Activated CD4-positive, alpha-beta memory T cell treated with anti-CD3 and anti-CD28 coated beads for 36 hours (primary cell): ENCODE measurements at regions of chr10 and their contacts with region 1.

Region 1: DNA sequence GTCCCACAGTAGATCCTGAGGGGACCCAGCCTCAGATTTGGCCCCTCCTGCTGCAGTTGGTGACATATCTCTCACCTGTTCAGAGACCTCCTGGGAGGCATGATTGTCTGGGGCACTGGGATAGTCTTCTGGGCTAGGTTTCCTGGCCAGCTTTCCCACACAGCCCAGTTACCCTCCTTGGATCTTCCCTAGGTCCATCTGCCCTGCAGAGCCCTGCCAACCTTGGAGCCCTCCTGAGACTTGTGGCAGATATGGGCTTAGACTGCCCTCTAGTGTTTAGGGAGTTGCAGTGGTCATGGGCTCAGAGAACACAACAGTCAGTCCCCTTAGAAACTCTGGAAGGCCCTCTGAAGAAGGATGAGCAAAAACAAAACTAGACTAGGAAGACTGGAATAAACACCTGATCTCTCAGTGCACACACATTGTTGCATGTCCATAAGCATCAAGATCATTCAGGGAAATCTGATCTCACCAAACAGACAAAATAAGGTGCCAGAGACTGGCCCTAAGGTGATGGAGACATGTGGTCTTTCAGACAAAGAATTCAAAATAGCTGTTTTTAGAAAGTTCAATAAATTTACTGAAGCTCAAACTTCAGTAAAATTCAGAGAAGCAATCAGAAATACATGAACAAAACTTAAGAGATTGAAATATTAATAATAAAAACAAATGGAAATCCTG is 324.6 kb downstream of the ATRNL1 start:
- DNase-seq: no peak
- H3K4me3 Mint-ChIP-seq: no peak overlapping the region
- H3K27ac Mint-ChIP-seq: no peak overlapping the region
- H3K4me1 Mint-ChIP-seq: no peaks in the 10 kb centered on the region
- H3K27me3 Mint-ChIP-seq: no peaks in the 10 kb centered on the region

Region 2: DNA sequence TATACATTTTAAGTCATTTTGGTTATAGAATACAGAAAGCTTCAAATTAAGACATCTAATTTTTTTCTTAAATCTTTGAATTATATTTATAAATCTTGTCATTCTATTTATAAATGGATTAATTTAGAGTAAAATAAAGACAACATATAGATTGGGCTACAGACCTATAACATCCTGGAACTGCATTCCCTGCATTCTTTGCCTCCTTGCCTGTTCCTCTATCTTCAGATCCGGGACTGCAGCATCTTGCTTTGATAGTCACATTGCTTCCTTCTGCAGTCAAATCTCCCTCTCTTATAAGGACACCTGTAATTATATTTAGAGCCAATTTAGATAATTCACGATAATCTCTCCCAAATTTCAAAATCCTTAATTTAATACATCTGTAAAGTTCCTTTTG is 260.4 kb before region 1 on chr10:
- CTCF ChIA-PET with region 1: no interaction called
- POLR2A ChIA-PET with region 1: no interaction called
- intact Hi-C with region 1: no loop called
- DNase-seq: no peak
- H3K4me3 Mint-ChIP-seq: no peak overlapping the region
- H3K27ac Mint-ChIP-seq: no peak overlapping the region
- H3K4me1 Mint-ChIP-seq: no peaks in the 10 kb centered on the region
- H3K27me3 Mint-ChIP-seq: peaks cover 4% of the 10 kb centered on the region

Region 3: DNA sequence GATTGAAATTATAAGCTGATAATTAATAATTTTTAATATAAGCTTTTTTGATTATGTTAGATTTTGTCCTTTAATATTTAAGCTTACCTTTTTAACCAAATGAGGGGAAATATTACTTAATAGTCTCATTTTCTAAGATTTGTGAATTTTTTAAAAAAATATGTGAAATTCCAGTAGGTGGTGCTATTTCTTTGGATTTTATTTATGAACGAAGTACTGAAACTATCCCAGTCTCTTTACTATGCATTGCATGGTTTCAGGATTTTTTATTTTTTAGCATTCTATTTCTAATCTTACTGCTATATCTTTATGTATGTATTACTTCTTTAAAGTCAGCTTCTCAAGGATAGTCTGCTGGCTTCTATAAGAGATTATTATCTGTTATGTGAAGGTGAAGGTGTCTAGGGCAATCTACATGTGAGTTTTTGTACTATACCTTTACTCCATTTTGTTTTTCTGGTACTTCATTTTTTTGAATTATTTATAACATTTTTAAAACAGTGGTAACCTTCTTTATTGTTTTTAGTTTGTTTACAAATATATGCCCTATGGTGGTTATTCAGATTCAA is 246.2 kb before region 1 on chr10:
- CTCF ChIA-PET with region 1: no interaction called
- POLR2A ChIA-PET with region 1: no interaction called
- intact Hi-C with region 1: loop called (anchors 5 kb)
- DNase-seq: no peak
- H3K4me3 Mint-ChIP-seq: no peak overlapping the region
- H3K27ac Mint-ChIP-seq: no peak overlapping the region
- H3K4me1 Mint-ChIP-seq: no peaks in the 10 kb centered on the region
- H3K27me3 Mint-ChIP-seq: no peaks in the 10 kb centered on the region